Activated CD8-positive, alpha-beta T cell treated with anti-CD3 and anti-CD28 coated beads, Interleukin-2, amount 10 ng/mL, durations not matched to agents 7 days and 5 days (primary cell): ENCODE measurements at regions of chr3 and their contacts with region 1.

Region 1: GRCh38 chr3:129371041-129371826 is 57.2 kb downstream of the EFCAB12 start:
- DNase-seq: no peak
- ATAC-seq: peak; percentile 24
- H3K4me3 Mint-ChIP-seq: no peak overlapping the region
- H3K27ac Mint-ChIP-seq: no peak overlapping the region
- H3K4me1 Mint-ChIP-seq: no peaks in the 10 kb centered on the region
- H3K27me3 Mint-ChIP-seq: no peaks in the 10 kb centered on the region

Region 2: GRCh38 chr3:129211772-129212171 is 159.5 kb before region 1 on chr3:
- CTCF ChIA-PET with region 1: no interaction called
- POLR2A ChIA-PET with region 1: no interaction called
- DNase-seq: no peak
- ATAC-seq: no peak
- H3K4me3 Mint-ChIP-seq: no peak overlapping the region
- H3K27ac Mint-ChIP-seq: no peak overlapping the region
- H3K4me1 Mint-ChIP-seq: no peaks in the 10 kb centered on the region
- H3K27me3 Mint-ChIP-seq: peaks cover 8% of the 10 kb centered on the region

Region 3: DNA sequence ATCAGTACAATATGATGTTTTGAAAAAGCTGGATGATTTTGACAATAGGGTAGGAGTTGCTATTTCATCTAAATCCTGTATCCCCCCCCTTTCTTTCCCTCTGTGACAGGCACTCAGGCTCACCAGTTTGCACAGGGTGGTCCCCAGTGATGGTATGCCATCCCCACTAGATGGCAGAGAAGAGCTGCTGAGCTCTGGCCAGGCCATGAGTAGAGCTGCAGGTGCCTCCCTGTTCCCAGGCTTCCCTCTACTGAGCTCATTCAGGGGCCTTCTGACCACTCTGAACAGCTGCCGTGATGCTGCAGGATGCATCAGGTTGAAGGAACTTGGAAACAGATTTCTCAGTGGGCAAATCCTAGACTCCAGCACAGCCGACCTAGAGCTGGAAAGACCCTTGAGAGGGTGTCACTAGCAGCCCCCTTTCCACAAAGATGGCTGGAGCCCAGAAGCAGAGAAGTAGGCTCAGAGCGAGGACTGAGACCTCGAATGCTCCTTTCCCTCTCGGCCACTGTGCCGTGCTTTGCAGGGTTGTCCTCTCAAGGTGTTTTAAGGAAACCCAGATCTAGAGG is 12.1 kb after region 1 on chr3:
- CTCF ChIA-PET with region 1: interaction called, 10 read pairs
- POLR2A ChIA-PET with region 1: no interaction called
- DNase-seq: peak; percentile 62
- ATAC-seq: peak; percentile 96
- H3K4me3 Mint-ChIP-seq: no peak overlapping the region
- H3K27ac Mint-ChIP-seq: no peak overlapping the region
- H3K4me1 Mint-ChIP-seq: no peaks in the 10 kb centered on the region
- H3K27me3 Mint-ChIP-seq: no peaks in the 10 kb centered on the region